Endothelial cell of umbilical vein (primary cell): ENCODE measurements at regions of chr16 and their contacts with region 1.

Region 1: GRCh38 chr16:20484726-20485125 is 33.4 kb downstream of the ACSM2A start:
- DNase-seq: no peak
- H3K4me3 ChIP-seq: no peak overlapping the region
- H3K27ac ChIP-seq: no peak overlapping the region
- H3K4me1 ChIP-seq: no peaks in the 10 kb centered on the region
- H3K27me3 ChIP-seq: no peaks in the 10 kb centered on the region
- CTCF ChIP-seq: no peak
- POLR2A ChIP-seq: no peak

Region 2: DNA sequence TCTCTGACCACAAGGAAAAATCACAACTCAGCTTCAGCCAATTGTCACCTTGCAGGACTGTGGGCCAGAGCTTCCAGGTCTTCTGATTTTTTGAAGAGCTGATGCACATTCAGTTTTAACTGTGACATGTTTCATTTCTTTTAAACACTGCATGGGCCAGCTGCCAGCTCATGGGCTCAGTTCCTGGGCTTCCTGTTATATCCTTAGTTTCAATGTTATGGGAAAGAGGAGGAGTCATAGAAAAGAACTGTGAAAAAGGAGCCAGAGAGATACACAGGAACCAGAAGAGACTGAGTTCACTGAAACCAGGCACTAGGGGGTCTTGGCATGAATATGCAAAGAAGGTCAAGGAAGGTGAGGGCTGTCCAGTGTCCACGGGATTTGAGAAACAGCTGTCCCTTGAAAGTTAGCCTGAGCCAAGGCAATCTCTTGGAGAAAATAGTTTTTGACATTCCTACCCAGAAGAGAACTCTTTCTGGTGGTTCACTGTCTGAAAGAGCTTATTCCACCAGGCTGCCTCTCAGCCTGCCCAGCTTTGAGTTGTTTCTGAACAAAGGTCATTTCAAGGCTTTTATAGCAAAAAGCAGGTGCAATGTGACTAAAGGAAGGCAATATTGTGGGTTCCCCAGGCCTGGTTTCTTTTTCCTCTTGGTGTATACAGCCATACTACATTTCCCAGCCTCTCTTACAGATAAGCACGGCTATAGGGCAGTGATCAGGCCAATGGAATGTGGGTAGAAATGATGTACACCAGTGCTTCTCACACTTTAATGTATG is 90.7 kb before region 1 on chr16:
- CTCF ChIA-PET with region 1: no interaction called
- POLR2A ChIA-PET with region 1: no interaction called
- dilution Hi-C with region 1: no loop called
- intact Hi-C with region 1: no loop called
- DNase-seq: peak; percentile 24
- H3K4me3 ChIP-seq: no peak overlapping the region
- H3K27ac ChIP-seq: no peak overlapping the region
- H3K4me1 ChIP-seq: no peaks in the 10 kb centered on the region
- H3K27me3 ChIP-seq: no peaks in the 10 kb centered on the region
- CTCF ChIP-seq: no peak
- POLR2A ChIP-seq: no peak

Region 3: DNA sequence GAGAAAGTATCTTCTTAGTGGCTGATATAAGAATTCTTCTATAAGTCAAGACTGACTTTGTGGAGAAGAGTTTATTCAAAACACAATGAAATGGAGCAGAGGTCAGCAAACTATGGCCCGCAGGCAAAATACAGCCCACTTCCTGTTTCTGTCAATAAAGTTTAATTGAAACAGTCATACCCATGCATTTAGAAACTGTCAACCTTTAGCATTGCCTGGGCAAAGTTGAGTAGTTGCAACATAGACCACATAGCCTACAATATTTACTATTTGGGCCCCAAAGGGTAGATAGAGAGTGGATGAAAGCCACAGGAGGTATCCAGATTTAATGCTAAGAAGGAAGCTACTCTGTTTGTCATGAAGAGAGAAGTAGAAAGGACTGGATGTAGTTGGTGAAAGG is 53.5 kb after region 1 on chr16:
- CTCF ChIA-PET with region 1: no interaction called
- POLR2A ChIA-PET with region 1: no interaction called
- dilution Hi-C with region 1: no loop called
- intact Hi-C with region 1: loop called (anchors 10 kb)
- DNase-seq: no peak
- H3K4me3 ChIP-seq: no peak overlapping the region
- H3K27ac ChIP-seq: no peak overlapping the region
- H3K4me1 ChIP-seq: no peaks in the 10 kb centered on the region
- H3K27me3 ChIP-seq: no peaks in the 10 kb centered on the region
- CTCF ChIP-seq: no peak
- POLR2A ChIP-seq: no peak